ENCODE measurements at regions of chr5 and their contacts with region 1.

Region 1: DNA sequence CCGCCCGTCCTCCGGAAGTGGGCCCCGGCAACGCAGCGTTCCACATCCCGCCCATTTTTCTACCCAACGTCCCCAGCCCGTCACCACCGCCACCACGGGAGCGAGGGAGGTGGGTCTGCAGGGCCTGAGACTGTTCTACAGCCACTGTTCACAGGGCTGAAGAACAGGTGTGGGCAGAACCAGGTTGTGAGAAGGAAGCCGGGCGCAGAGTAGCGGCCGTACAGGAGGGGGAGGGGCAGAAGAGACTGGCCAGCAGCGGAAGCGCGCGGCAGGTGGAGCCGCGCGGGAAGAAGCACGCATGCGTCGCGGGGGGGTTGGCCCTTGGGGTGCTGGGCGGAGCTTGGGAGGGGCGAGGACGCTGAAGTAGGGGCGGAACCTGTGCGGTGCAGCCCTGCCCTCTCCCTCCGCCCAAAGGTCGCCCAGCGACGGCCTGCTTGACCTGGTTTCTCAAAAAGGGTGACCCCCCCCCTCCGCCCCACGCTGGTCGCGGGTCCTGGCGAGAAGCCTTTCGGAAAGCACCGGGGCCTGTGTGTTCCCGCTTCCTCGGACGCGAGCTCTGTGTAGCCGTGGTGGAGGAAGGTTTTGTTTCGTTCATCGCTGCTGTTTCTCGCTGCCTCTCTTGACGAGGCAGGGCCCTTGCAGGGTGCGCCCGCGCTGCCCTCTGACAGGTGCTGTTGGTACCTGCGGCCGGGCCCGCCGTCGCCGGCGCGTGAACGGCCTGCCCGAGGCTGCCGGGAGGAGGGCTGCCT is 7.8 kb upstream of the MGAT1 start:
- DNase-seq: peak; percentile 80 to 96
- H3K4me3 ChIP-seq: peak overlapping the region; percentile 95
- H3K27ac ChIP-seq: peak overlapping the region; percentile 91
- H3K4me1 ChIP-seq: peaks cover 55% of the 10 kb centered on the region
- H3K27me3 ChIP-seq: no peaks in the 10 kb centered on the region
- CTCF ChIP-seq: no peak

Region 2: DNA sequence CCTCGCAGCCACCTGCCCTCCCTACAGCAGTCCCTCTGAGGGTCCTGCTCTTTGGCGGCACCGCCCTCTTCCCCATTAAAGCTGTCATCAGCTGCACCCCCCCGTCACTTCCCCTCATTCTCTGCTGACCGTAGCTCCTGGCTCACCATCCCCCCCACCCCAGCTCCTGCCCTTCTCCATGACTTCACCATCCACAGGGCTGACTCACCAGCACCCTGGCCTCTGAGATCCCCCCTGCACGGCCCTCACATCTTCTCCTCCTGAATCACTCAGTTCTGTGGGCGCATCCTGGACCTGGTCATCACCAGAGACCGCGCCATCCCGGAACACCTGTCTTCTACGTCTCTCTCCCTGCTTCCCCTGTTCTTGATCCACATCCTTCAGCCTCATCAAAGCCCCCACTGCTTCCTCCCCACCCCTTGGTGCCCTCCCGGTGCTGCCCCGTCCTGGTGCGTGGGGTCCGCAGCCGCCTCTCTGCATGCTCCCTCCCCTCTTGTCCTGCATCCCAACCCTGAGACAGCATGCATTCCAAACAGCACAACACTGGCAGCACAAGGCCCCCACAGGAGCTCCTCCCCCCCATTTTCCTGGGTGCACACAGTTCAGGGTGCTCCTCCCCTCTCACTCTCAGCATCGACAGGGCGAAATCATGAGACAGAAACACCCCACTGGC is 173.8 kb before region 1 on chr5:
- CTCF ChIA-PET with region 1: no interaction called
- POLR2A ChIA-PET with region 1: no interaction called
- intact Hi-C with region 1: no loop called
- DNase-seq: no peak
- H3K4me3 ChIP-seq: no peak overlapping the region
- H3K27ac ChIP-seq: no peak overlapping the region
- H3K4me1 ChIP-seq: no peaks in the 10 kb centered on the region
- H3K27me3 ChIP-seq: peaks cover 61% of the 10 kb centered on the region
- CTCF ChIP-seq: no peak

Region 3: GRCh38 chr5:180831139-180832048 is 21.0 kb after region 1 on chr5:
- CTCF ChIA-PET with region 1: no interaction called
- POLR2A ChIA-PET with region 1: interaction called, 9 read pairs
- intact Hi-C with region 1: loop called (anchors 2 kb)
- DNase-seq: peak; percentile 49 to 82
- H3K4me3 ChIP-seq: peak overlapping the region; percentile 72
- H3K27ac ChIP-seq: peak overlapping the region; percentile 72
- H3K4me1 ChIP-seq: peaks cover 23% of the 10 kb centered on the region
- H3K27me3 ChIP-seq: no peaks in the 10 kb centered on the region
- CTCF ChIP-seq: 0 out of 2 replicates have a peak, but pooled peaks have one; percentile 27

Region 4: GRCh38 chr5:181223058-181223728 is 412.8 kb after region 1 on chr5 and contains the start of gene TRIM41:
- CTCF ChIA-PET with region 1: no interaction called
- POLR2A ChIA-PET with region 1: no interaction called
- intact Hi-C with region 1: loop called (anchors 10 kb)
- DNase-seq: peak; percentile 93 to 99
- H3K4me3 ChIP-seq: peak within 1 kb of the TSS; percentile 68
- H3K27ac ChIP-seq: peak within 1 kb of the TSS; percentile 89
- H3K4me1 ChIP-seq: peaks cover 15% of the 10 kb centered on the region; the same call in 1 of the 2 replicates
- H3K27me3 ChIP-seq: no peaks in the 10 kb centered on the region
- CTCF ChIP-seq: no peak
- total RNA-seq, gene TRIM41: 57.6 and 66.0 TPM in 2 replicates

Measured in PC-9 (cell line).